ENCODE measurements at regions of chr17 and their contacts with region 1.

Region 1: DNA sequence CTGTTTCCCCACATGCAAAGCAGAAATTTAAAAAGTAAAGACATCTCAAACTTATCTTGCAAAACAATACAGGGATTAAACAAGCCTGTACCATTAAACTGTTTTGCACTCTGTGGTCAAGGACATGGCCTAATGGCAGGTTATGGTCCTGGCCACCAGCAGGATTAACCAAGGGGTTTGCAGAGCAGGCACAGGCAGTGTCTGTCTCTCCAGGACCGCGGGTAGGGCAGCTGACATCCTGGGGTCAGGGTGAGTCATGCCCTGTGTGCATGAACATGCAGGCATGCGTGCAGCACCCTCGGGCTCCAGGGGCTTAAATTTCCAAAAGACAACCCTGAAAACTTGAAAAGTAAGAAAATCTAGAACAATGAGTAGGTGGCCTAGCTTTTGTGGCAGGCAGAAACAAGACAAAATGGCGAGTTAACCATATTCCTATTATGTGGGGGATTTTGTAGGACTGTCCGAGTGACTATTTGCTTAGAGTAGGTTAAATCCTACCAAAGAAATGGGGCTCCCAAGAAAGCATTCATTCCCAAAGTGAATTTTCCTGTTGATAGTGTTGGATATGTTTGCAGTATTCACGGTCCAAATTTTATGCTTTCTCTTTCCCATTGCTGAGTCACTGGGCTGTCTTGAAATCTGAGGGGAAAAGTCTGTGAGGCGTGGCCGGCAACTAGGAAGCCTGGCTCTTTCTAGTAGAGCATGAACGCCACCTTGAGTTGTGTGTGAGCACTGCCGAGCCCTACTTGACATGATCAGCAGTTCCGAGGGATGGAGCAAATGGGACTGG is 158.4 kb upstream of the FAM20A start:
- DNase-seq: peak; percentile 40
- H3K4me3 Mint-ChIP-seq: peak overlapping the region; percentile 54
- H3K27ac Mint-ChIP-seq: peak overlapping the region; percentile 8
- H3K4me1 Mint-ChIP-seq: peaks cover 8% of the 10 kb centered on the region
- H3K27me3 Mint-ChIP-seq: peaks cover 3% of the 10 kb centered on the region

Region 2: DNA sequence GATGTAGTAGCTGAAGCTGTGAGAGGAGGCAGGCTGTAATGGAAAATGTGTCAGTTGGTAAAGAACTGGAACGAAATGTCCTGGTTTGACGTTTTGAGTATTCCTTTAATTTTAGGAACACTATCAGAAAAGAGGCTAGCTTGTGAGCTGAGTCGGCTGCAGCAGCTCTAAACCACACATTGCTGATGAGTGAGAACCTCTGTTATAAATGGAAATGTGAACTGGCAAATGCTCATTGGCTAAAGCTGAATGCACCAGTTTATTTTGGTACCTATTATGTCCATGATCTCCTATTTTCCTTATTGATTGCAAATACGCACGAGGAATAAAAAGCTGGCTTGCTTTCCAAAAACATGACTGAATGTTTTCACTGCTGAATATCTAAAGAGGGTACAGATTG is 291.2 kb before region 1 on chr17:
- intact Hi-C with region 1: loop called (anchors 5 kb)
- DNase-seq: no peak
- H3K4me3 Mint-ChIP-seq: no peak overlapping the region
- H3K27ac Mint-ChIP-seq: no peak overlapping the region
- H3K4me1 Mint-ChIP-seq: peaks cover 8% of the 10 kb centered on the region
- H3K27me3 Mint-ChIP-seq: peaks cover 28% of the 10 kb centered on the region

Region 3: GRCh38 chr17:69282002-69282401 is 522.5 kb after region 1 on chr17:
- intact Hi-C with region 1: no loop called
- DNase-seq: no peak
- H3K4me3 Mint-ChIP-seq: no peak overlapping the region
- H3K27ac Mint-ChIP-seq: no peak overlapping the region
- H3K4me1 Mint-ChIP-seq: no peaks in the 10 kb centered on the region
- H3K27me3 Mint-ChIP-seq: no peaks in the 10 kb centered on the region

Measured in activated T-helper 2 cell treated with anti-CD3 and anti-CD28 coated beads, Interferon-gamma antibody, Interleukin-2, Interleukin-4, amounts not matched to agents 10 μg/mL and 5 μg/mL and 100 μg/mL, durations not matched to agents 14 hours and 24 hours and 36 hours (primary cell).